ENCODE measurements at regions of chr12 and their contacts with region 1.

Region 1: DNA sequence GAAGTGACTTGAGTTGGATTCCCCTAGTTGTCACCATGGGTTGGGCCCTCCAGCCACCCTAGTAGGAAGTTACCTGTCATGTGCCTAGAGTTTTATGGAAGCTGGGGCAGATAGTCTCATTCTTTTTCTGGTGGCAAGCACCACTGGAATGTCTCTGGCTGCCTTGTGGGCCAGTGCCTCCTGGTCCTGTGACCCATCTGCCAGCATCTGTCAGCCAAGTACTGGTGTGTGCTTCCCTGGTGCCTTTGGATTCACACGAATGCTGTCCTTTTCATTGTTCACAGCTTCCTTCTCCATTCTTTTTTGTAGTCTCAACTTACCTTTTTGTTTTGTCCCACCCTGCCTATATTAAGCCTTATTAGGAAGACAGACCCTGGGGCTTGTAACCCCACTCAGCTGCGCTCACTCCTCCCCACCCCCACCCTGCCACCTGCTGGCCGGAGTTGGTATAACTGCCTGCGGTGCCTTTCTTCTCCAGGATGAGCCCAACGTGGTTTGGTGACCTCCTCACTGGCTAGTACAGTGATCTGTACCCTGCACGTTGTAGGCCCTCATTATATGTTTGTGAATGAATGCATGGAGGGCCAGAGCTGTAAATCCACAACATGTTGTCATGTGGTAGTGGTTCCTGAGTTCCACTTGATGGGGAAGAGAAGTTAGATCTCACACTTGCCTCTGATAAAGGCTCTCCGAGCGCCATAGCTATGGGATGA is 125.7 kb downstream of the TSPAN9 start:
- DNase-seq: peak; percentile 71
- ATAC-seq: peak; percentile 36

Region 2: DNA sequence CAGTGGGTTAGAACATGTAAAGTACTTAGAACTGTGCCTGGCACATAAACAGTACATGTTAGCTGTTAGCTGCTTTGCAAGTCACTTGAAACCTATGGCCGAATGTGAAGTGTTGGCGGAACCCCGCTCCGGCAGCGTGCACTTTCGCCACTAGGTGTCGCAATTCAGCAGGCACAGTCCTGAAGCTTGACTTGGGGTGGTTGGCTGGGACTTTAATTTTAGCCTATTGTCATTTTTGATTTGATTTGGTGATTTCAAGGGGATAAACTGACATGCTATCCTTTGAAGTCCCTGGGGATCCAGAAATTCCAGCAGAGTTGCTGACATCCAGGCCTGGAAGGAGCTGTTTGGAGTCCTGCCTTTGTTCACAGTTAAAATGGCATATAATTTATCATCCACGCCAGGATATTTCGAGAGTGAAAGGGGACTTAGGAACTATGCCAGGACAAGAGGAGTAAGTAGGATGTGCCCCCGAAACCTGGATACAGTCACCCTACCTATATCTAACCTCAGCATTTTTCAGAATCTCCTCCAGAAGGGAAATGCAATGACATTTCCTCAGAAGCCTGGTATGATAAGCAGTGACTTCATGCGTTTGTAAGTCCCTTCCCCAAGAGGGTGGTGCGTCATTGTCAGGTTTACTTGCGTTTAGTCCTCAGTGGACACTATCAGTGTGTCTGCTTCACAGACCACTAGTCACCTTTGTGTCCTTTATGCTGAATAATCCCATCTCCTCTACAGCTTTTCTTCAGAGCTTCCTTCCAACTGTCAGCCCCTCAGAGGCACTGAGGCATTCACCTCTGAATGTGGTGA is 129.2 kb before region 1 on chr12:
- intact Hi-C with region 1: loop called (anchors 10 kb)
- DNase-seq: peak; percentile 86
- ATAC-seq: peak; percentile 40

Region 3: GRCh38 chr12:3135522-3136461 is 67.1 kb before region 1 on chr12:
- intact Hi-C with region 1: loop called (anchors 5 kb)
- DNase-seq: no peak
- ATAC-seq: peak; percentile 52

Region 4: GRCh38 chr12:3275171-3276041 is 72.5 kb after region 1 on chr12:
- intact Hi-C with region 1: loop called (anchors 5 kb)
- DNase-seq: peak; percentile 87
- ATAC-seq: peak; percentile 76

Region 5: DNA sequence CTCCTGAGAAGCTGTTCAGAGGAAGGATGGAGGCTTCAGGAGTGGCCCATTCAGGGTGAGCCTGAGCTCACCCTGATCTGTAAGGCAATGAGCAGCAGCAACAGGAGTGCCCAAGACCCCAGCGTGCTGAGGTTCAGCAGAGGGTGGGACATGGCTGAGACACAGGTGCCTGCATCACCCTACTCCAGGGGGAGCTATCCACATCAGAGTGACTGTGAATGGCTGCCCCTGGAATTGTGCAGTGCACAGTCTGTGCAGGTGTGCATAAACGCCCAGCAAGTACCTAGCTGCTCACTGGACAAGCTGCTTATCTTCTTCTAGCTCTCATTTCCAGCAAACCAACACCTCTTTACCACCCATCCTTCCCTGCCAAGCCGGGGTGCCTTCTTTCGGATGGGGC is 147.5 kb after region 1 on chr12:
- intact Hi-C with region 1: no loop called
- DNase-seq: no peak
- ATAC-seq: no peak

Measured in Right ventricle myocardium superior (tissue), 1 donor.